Sciatic nerve (tissue), 2 donors: ENCODE measurements at regions of chr6 and their contacts with region 1.

Region 1: GRCh38 chr6:865846-866245 is 172.9 kb upstream of the EXOC2 start:
- DNase-seq: no peak
- ATAC-seq: no peak

Region 2: GRCh38 chr6:842141-842540 is 23.7 kb before region 1 on chr6:
- intact Hi-C with region 1: no loop called
- DNase-seq: no peak
- ATAC-seq: no peak

Region 3: GRCh38 chr6:925656-926213 is 59.9 kb after region 1 on chr6:
- intact Hi-C with region 1: loop called (anchors 2 kb)
- DNase-seq: no peak
- ATAC-seq: no peak